Activated CD4-positive, alpha-beta memory T cell treated with anti-CD3 and anti-CD28 coated beads for 36 hours (primary cell): ENCODE measurements at regions of chr1 and their contacts with region 1.

Region 1: GRCh38 chr1:55127827-55128343 is 87.3 kb downstream of the USP24 start:
- DNase-seq: peak; percentile 35
- H3K4me3 Mint-ChIP-seq: no peak overlapping the region
- H3K27ac Mint-ChIP-seq: peak overlapping the region; percentile 79
- H3K4me1 Mint-ChIP-seq: peaks cover 33% of the 10 kb centered on the region
- H3K27me3 Mint-ChIP-seq: no peaks in the 10 kb centered on the region

Region 2: GRCh38 chr1:55007625-55008024 is 120.3 kb before region 1 on chr1:
- CTCF ChIA-PET with region 1: no interaction called
- POLR2A ChIA-PET with region 1: no interaction called
- intact Hi-C with region 1: no loop called
- DNase-seq: no peak
- H3K4me3 Mint-ChIP-seq: no peak overlapping the region
- H3K27ac Mint-ChIP-seq: no peak overlapping the region
- H3K4me1 Mint-ChIP-seq: no peaks in the 10 kb centered on the region
- H3K27me3 Mint-ChIP-seq: no peaks in the 10 kb centered on the region

Region 3: GRCh38 chr1:55073187-55073916 is 54.5 kb before region 1 on chr1:
- CTCF ChIA-PET with region 1: no interaction called
- POLR2A ChIA-PET with region 1: no interaction called
- intact Hi-C with region 1: loop called (anchors 1 kb)
- DNase-seq: peak; percentile 55
- H3K4me3 Mint-ChIP-seq: no peak overlapping the region
- H3K27ac Mint-ChIP-seq: peak overlapping the region; percentile 91
- H3K4me1 Mint-ChIP-seq: peaks cover 22% of the 10 kb centered on the region
- H3K27me3 Mint-ChIP-seq: no peaks in the 10 kb centered on the region